Right cardiac atrium (tissue), 5 donors: ENCODE measurements at regions of chr6 and their contacts with region 1.

Region 1: DNA sequence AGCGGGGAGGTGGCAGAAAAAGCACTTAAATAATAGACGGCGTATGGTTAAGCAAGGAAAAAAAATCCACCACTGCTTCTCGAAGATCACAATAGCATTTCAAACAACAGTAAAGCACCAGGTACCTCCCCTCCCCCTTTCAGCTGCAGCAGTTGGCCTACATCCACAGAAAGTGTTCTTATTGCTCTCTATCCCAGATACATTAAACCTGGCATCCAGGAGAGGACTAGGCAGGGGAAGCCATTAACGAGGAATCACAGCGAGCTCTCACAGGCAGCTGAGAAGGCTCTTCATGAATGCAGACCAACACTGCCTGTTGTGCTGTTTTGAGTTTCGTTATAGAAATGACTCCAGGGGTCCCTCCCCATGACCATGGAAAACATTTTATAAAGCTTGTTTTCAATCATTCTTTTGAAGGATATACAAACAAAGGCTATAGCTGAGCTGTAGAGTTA is 11.8 kb downstream of the FYN start:
- DNase-seq: no peak
- ATAC-seq: no peak
- H3K4me3 ChIP-seq: no peak overlapping the region
- H3K27ac ChIP-seq: no peak overlapping the region
- H3K4me1 ChIP-seq: peaks cover 25% of the 10 kb centered on the region
- H3K27me3 ChIP-seq: no peaks in the 10 kb centered on the region

Region 2: DNA sequence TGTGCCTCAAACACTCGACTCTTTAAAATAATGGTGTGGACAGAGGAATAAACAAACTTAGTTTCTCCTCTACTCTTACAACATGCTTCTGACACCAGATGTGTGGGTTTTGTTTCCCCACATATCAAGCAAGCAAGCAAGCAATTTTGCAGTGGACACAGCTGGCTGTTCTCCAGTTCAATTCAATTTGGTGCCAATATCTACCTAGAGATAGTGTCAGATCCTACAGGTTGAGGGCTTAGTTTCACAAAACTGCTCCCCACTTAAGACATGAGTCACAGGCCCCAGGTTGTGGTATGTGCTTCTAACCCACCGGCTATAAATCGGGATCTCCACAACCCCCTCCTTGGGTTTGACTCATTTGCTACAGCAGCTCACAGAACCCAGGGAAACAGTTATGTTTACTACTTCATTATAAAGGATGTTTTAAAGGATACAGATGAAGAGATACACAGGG is 124.4 kb before region 1 on chr6:
- intact Hi-C with region 1: loop called in 1 of 4 experiments (anchors 10 kb)
- DNase-seq: no peak
- ATAC-seq: no peak
- H3K4me3 ChIP-seq: no peak overlapping the region
- H3K27ac ChIP-seq: no peak overlapping the region
- H3K4me1 ChIP-seq: peaks cover 16% of the 10 kb centered on the region
- H3K27me3 ChIP-seq: no peaks in the 10 kb centered on the region